T-cell (primary cell): ENCODE measurements at regions of chr10 and their contacts with region 1.

Region 1: DNA sequence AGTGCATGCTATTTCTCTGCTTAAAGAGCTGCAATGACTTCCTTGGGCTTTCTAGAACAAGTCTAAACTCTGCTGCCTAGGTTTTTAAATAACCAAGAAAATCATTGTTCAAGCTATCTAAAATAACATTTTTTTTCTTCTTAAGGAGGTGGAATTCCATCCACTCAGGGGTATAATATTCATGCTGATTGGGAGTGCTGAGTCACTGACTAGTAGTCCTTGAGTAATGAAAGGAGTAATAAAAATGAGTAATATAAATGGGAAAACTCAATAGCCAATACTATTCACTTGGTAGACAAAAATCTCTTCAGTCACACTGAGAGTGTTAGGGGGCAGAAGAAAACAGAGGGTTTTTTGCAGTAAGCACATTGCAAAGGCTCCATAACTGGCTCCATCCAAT is 72.0 kb downstream of the GFRA1 start:
- DNase-seq: no peak
- ATAC-seq: no peak
- H3K4me3 ChIP-seq: no peak overlapping the region
- H3K4me3 Mint-ChIP-seq: no peak overlapping the region
- H3K27ac ChIP-seq: no peak overlapping the region
- H3K27ac Mint-ChIP-seq: no peak overlapping the region
- H3K4me1 ChIP-seq: no peaks in the 10 kb centered on the region
- H3K4me1 Mint-ChIP-seq: no peaks in the 10 kb centered on the region
- H3K27me3 ChIP-seq: no peaks in the 10 kb centered on the region
- H3K27me3 Mint-ChIP-seq: no peaks in the 10 kb centered on the region

Region 2: GRCh38 chr10:116226053-116226452 is 25.0 kb after region 1 on chr10:
- CTCF ChIA-PET with region 1: no interaction called
- POLR2A ChIA-PET with region 1: interaction called in 1 of 2 experiments, 10 read pairs
- DNase-seq: no peak
- ATAC-seq: no peak
- H3K4me3 ChIP-seq: no peak overlapping the region
- H3K4me3 Mint-ChIP-seq: no peak overlapping the region
- H3K27ac ChIP-seq: no peak overlapping the region
- H3K27ac Mint-ChIP-seq: no peak overlapping the region
- H3K4me1 ChIP-seq: no peaks in the 10 kb centered on the region
- H3K4me1 Mint-ChIP-seq: no peaks in the 10 kb centered on the region
- H3K27me3 ChIP-seq: no peaks in the 10 kb centered on the region
- H3K27me3 Mint-ChIP-seq: no peaks in the 10 kb centered on the region

Region 3: GRCh38 chr10:116324951-116325635 is 124.1 kb after region 1 on chr10:
- CTCF ChIA-PET with region 1: no interaction called
- POLR2A ChIA-PET with region 1: no interaction called
- DNase-seq: no peak
- ATAC-seq: no peak
- H3K4me3 ChIP-seq: no peak overlapping the region
- H3K4me3 Mint-ChIP-seq: no peak overlapping the region
- H3K27ac ChIP-seq: no peak overlapping the region
- H3K27ac Mint-ChIP-seq: no peak overlapping the region
- H3K4me1 ChIP-seq: no peaks in the 10 kb centered on the region
- H3K4me1 Mint-ChIP-seq: no peaks in the 10 kb centered on the region
- H3K27me3 ChIP-seq: peaks cover 0 to 6% of the 10 kb centered on the region in 2 experiments
- H3K27me3 Mint-ChIP-seq: peaks cover 0 to 4% of the 10 kb centered on the region in 2 donors